HAP-1 (cell line): ENCODE measurements at regions of chr10 and their contacts with region 1.

Region 1: DNA sequence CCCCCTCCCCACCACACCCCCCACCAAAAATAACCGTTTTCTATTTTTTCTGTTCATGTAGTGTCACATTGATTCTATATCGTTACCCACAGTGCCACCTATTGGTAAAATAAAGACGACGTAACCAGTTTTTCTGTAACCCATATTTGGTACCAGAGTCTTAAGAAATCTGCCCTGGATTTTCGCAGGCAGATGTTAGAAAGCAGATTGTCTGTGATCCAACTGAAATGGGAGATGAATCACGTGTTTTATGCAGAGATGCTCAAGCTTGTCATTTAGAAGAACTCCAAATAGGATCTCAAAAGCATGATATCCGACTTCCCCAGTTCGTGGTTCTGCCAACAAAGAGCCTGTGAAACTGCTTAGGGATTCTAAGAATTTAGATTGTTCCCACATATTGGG is 261.1 kb upstream of the CSTF2T start:
- DNase-seq: peak in 1 of 2 experiments; percentile 43
- H3K4me3 ChIP-seq: no peak overlapping the region
- H3K4me1 ChIP-seq: no peaks in the 10 kb centered on the region
- H3K27me3 ChIP-seq: 0 out of 2 replicates have a peak, but pooled peaks cover 3% of the 10 kb centered on the region

Region 2: DNA sequence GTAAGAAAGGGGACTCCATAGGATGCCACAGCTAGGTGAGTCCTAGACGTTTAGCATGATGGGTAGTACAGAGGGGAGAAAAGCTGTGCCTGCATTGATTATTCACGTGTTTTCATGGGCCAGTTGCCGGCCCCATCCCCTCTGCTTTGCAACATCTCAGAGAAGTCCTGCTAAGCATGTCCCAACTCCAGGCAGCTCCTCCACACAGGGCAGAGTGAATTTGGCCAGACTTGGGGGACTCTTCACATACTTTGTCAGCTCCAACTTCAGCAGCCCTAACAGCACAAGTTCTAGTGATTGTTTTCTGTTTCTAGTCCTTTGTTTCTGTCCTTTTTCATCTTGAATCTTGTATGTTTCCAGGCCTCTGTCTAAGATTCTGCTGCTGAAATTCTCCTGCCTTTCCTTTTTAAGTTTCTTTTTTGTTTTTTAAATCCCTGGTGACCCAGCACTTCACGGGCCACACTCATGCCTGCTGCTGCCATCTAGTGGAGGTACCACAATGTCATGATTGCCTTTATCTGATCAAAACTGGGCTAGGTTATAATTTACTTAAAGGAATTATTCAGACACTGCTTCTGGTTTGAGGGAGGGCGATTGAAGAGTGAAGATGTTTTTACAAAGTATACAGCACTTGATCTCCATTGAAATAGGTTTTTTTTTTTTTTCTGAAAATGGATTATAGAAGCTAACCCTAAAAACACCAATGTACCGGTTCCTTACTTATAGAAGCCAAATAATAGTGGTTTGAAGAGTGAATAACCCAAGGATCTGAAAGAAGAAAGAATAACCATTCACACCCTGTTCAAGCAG is 538.0 kb before region 1 on chr10:
- in situ Hi-C with region 1: loop called (anchors 25 kb)
- DNase-seq: peak; percentile 23 to 63
- H3K4me3 ChIP-seq: no peak overlapping the region
- H3K4me1 ChIP-seq: no peaks in the 10 kb centered on the region
- H3K27me3 ChIP-seq: no peaks in the 10 kb centered on the region

Region 3: DNA sequence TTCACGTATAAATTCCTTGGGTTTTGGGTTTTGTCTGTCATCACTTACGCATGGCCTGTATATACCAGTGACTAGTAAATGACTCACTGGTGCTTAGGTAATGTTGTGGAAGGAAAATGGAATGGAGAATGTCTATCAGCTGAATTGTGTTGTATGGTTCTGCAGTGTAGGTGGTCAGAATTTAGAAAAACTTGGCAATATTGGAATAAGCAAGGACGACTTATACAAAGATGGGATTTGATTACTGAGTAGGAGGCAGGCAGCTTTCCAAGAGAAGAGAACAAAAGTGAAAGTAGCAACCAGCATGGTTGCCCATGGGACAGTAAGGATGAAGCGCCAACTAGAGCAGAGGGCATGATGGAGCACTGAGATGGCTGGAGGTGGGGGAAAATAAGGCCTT is 92.5 kb before region 1 on chr10:
- in situ Hi-C with region 1: no loop called
- DNase-seq: no peak
- H3K4me3 ChIP-seq: no peak overlapping the region
- H3K4me1 ChIP-seq: no peaks in the 10 kb centered on the region
- H3K27me3 ChIP-seq: no peaks in the 10 kb centered on the region